ENCODE measurements at regions of chr4 and their contacts with region 1.

Region 1: DNA sequence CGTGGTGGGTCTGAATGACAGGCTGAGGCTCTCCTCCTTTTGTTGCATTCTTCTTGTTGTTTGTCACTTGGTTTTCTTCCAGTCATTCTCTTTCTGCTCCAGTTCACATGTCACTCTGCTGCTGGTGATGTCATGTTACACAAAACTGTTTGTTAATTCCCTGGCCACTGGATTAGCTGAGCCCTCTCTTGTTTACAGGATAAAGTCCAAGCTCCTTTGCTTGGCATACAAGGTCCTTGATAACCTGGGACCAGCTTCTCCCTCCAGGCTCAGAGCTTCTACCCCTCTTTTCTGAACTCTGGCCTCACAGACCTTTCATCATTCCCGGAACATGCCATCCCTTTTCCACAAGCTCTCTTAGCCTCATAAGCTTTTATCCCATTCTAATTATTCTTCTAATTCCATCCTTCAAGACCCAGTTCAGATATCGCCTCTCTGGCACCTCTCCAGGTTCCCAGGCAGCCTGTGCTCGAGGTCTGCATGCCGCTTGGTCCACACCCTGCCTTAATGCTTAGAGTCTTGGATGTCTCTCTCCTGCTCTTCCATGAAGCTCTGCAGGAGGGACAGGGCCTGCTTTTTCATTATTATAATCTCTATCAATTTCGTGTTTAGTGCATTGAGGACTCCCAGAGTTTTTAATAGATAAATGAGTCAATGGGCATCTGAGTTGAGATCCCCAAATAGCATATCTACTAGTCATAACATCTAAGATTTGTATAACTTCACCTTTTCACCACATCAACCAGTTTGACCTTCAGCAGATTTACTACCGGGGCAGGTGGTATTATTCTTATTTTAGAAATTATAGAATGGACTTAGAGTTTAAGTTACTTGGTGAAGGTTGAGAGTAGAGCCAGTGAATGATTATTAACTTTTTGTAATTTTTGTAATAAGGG is 98.7 kb downstream of the TMEM131L start:
- DNase-seq: peak; percentile 45 to 51
- ATAC-seq: peak; percentile 64 to 93
- H3K4me3 ChIP-seq: peak overlapping the region in 1 of 4 donors; percentile 24
- H3K27ac ChIP-seq: peak overlapping the region; percentile 83 to 94 (median 86)
- H3K4me1 ChIP-seq: peaks cover 46 to 51% of the 10 kb centered on the region in 2 donors
- H3K27me3 ChIP-seq: no peaks in the 10 kb centered on the region
- CTCF ChIP-seq: no peak
- POLR2A ChIP-seq: peak; percentile 10 to 25

Region 2: DNA sequence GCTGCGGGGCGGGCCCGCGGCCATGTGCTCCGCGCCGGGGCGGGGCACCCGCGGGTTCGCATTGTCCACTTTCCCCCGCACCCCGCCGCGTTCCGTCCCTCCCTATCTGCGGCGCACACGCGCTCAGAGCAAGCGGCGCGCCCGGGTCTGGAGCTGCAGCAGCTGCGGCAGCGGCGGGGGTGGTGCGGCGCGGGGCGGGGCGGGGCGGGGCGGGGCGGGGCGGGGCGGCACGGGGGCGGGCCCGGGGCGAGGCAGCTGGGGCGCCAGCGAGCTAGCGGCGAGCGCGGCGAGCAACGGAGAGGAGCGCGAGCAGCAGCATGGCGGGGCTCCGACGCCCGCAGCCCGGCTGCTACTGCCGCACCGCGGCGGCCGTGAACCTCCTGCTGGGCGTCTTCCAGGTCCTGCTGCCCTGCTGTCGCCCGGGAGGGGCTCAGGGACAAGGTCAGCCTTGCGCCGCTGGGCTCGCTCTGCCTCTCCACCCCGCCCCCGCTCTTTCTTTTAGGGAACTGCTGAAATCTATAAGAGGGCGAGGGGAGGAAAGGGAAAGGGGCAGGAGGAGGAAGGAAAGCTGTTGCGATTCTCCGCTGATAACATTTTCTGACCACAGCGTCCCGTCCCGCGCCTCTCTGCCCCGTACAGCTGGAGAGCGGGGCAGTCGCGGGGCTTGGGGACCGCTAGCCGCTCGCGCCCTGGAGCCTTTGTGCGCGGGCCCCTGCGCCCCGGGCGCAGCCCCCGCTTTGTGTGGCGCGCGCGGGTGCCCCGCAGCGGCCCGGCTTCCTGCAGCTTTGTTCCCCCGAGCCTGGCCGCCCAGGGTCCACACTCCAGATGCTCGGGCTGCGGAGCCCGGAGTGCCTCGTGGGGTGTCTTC is 98.6 kb before region 1 on chr4 and contains the start of gene TMEM131L:
- in situ Hi-C with region 1: loop called in 1 of 4 experiments (anchors 10 kb)
- intact Hi-C with region 1: loop called (anchors 2 kb)
- DNase-seq: peak; percentile 61 to 72
- ATAC-seq: peak; percentile 52 to 59
- H3K4me3 ChIP-seq: peak within 1 kb of the TSS; percentile 72 to 95 (median 86)
- H3K27ac ChIP-seq: peak within 1 kb of the TSS; percentile 88 to 98 (median 92)
- H3K4me1 ChIP-seq: peaks cover 56 to 59% of the 10 kb centered on the region in 2 donors
- H3K27me3 ChIP-seq: no peaks in the 10 kb centered on the region
- CTCF ChIP-seq: peak in 1 of 5 experiments; percentile 4
- POLR2A ChIP-seq: peak; percentile 81 to 93
- total RNA-seq, gene TMEM131L: 4.6 to 21.4 (median 9.5) TPM

Region 3: DNA sequence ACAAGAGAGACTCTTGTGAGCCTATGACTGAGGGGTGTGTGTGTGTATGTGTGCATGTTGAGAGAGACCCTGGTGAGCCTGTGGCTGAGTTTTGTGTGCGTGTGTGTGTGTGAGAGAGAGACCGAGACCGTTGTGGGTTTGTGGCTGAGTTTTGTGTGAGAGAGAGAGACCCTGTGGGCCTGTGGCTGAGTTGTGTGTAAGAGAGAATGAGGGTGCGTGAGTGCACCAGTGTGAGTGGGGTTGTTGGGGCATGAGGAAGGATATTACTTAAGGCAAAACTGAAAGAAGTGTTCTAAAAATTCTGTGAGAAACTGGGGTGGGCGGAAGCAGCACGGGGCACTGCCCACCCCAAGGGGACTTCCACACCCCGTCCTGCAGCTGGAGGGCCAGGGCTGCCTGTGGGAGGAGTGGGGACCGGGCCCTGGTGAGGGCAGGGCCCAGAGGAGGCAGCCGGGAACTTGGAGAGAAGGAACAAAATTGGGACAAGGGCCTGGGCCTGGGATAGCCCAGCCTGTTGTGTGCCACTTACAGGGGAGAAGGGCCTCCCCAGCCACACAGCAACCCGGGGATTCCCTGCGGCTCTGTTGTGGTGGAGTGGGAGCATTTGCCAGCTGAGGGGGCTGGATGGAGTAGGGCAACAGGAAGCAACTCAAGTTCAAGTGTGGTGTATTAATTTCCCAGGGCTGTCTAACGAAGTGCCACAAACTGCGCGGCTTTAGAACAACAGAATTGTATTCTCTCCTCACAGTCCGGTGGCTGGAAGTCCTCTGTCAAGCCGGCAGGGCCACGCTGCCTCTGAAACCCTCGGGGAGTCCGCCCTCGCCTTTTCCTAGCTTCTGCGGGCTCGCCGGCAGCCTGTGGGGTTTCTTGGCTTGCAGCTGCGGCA is 76.6 kb before region 1 on chr4:
- in situ Hi-C with region 1: no loop called
- intact Hi-C with region 1: loop called (anchors 5 kb)
- DNase-seq: peak in 1 of 2 donors; percentile 63
- ATAC-seq: peak; percentile 11 to 25
- H3K4me3 ChIP-seq: peak overlapping the region; percentile 19 to 49 (median 43)
- H3K27ac ChIP-seq: peak overlapping the region; percentile 78 to 98 (median 84)
- H3K4me1 ChIP-seq: peaks cover 83 to 86% of the 10 kb centered on the region in 2 donors
- H3K27me3 ChIP-seq: no peaks in the 10 kb centered on the region
- CTCF ChIP-seq: no peak
- POLR2A ChIP-seq: no peak

Region 4: GRCh38 chr4:153759407-153760316 is 194.8 kb after region 1 on chr4 and contains the start of gene RNF175:
- in situ Hi-C with region 1: no loop called
- intact Hi-C with region 1: no loop called
- DNase-seq: no peak
- ATAC-seq: no peak
- H3K4me3 ChIP-seq: peak within 1 kb of the TSS; percentile 29 to 56 (median 48)
- H3K27ac ChIP-seq: no peak within 1 kb of the TSS
- H3K4me1 ChIP-seq: no peaks in the 10 kb centered on the region
- H3K27me3 ChIP-seq: peaks cover 8 to 31% (median 15%) of the 10 kb centered on the region in 3 donors
- CTCF ChIP-seq: no peak
- POLR2A ChIP-seq: no peak
- total RNA-seq, gene RNF175: 1.2 TPM in 1 of 4 donors, not detected in the others